ENCODE measurements at regions of chr9 and their contacts with region 1.

Region 1: GRCh38 chr9:85688361-85688760 is 53.4 kb downstream of the AGTPBP1 start:
- DNase-seq: peak; percentile 1
- H3K4me3 ChIP-seq: no peak overlapping the region
- H3K27ac ChIP-seq: no peak overlapping the region
- H3K4me1 ChIP-seq: peaks cover 6% of the 10 kb centered on the region
- H3K27me3 ChIP-seq: no peaks in the 10 kb centered on the region
- CTCF ChIP-seq: no peak

Region 2: GRCh38 chr9:85639675-85640186 is 48.6 kb before region 1 on chr9:
- CTCF ChIA-PET with region 1: no interaction called
- POLR2A ChIA-PET with region 1: no interaction called
- intact Hi-C with region 1: loop called (anchors 5 kb)
- DNase-seq: peak; percentile 7
- H3K4me3 ChIP-seq: no peak overlapping the region
- H3K27ac ChIP-seq: no peak overlapping the region
- H3K4me1 ChIP-seq: no peaks in the 10 kb centered on the region
- H3K27me3 ChIP-seq: no peaks in the 10 kb centered on the region
- CTCF ChIP-seq: no peak

Region 3: GRCh38 chr9:85658716-85659115 is 29.6 kb before region 1 on chr9:
- CTCF ChIA-PET with region 1: no interaction called
- POLR2A ChIA-PET with region 1: no interaction called
- intact Hi-C with region 1: no loop called
- DNase-seq: no peak
- H3K4me3 ChIP-seq: no peak overlapping the region
- H3K27ac ChIP-seq: no peak overlapping the region
- H3K4me1 ChIP-seq: peaks cover 9% of the 10 kb centered on the region
- H3K27me3 ChIP-seq: no peaks in the 10 kb centered on the region
- CTCF ChIP-seq: no peak

Region 4: DNA sequence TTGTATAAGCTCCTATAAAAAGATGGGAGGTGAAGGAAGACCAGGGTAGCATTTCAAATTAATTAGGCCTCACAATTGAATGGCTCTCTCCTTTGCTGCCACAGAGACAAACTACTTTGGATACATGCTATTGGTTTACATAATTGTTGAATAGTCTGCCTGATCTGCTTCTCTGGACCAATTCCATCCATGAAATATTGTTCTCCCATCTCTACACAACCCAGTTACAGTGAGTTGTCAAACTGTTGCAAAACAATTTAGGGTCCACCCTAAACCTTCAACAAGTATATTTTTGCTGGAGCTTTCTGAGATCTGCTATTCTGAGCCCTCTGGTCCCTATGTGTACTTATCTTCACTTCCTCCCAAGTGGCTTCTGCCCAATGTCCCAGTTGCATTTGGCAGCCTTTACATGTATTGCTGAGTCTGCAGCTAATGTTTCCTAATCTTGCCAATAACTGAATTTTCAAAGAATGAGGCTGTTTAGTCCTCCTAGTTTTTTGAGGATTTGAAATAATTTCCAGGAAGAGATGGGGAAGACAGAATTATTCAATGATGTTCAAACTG is 14.4 kb after region 1 on chr9:
- CTCF ChIA-PET with region 1: interaction called, 14 read pairs
- POLR2A ChIA-PET with region 1: no interaction called
- intact Hi-C with region 1: no loop called
- DNase-seq: no peak
- H3K4me3 ChIP-seq: no peak overlapping the region
- H3K27ac ChIP-seq: no peak overlapping the region
- H3K4me1 ChIP-seq: peaks cover 6% of the 10 kb centered on the region
- H3K27me3 ChIP-seq: no peaks in the 10 kb centered on the region
- CTCF ChIP-seq: no peak